ENCODE measurements at regions of chr18 and their contacts with region 1.

Region 1: DNA sequence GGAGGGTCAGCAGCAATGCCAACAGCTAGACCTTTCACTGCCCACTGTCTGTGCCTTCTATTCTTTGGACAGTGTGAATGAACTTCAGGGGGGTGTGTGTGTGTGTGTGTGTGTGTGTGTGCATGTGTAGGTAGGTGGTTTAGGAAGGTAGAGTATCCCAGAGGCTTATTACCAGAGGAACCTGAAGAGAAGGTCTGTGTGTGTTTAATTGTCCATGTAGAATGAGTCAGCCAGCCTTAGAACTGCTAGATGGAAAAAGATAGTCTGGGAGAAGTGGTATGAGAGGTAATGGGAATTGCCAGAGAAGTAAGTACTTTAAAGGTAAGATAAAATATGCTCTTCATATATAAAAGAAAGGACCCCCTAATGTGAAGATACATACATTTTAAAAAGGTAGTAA is 522.2 kb downstream of the PIK3C3 start:
- DNase-seq: no peak
- ATAC-seq: no peak
- H3K4me3 ChIP-seq: no peak overlapping the region
- H3K4me3 Mint-ChIP-seq: no peak overlapping the region
- H3K27ac ChIP-seq: no peak overlapping the region
- H3K27ac Mint-ChIP-seq: no peak overlapping the region
- H3K4me1 ChIP-seq: no peaks in the 10 kb centered on the region
- H3K4me1 Mint-ChIP-seq: no peaks in the 10 kb centered on the region
- H3K27me3 ChIP-seq: no peaks in the 10 kb centered on the region
- H3K27me3 Mint-ChIP-seq: no peaks in the 10 kb centered on the region
- CTCF ChIP-seq: no peak

Region 2: GRCh38 chr18:42426496-42427015 is 50.7 kb before region 1 on chr18:
- intact Hi-C with region 1: loop called (anchors 10 kb)
- DNase-seq: no peak
- ATAC-seq: no peak
- H3K4me3 ChIP-seq: no peak overlapping the region
- H3K4me3 Mint-ChIP-seq: no peak overlapping the region
- H3K27ac ChIP-seq: no peak overlapping the region
- H3K27ac Mint-ChIP-seq: no peak overlapping the region
- H3K4me1 ChIP-seq: no peaks in the 10 kb centered on the region
- H3K4me1 Mint-ChIP-seq: no peaks in the 10 kb centered on the region
- H3K27me3 ChIP-seq: no peaks in the 10 kb centered on the region
- H3K27me3 Mint-ChIP-seq: no peaks in the 10 kb centered on the region
- CTCF ChIP-seq: no peak